GM12878 (cell line): ENCODE measurements at regions of chr16 and their contacts with region 1.

Region 1: DNA sequence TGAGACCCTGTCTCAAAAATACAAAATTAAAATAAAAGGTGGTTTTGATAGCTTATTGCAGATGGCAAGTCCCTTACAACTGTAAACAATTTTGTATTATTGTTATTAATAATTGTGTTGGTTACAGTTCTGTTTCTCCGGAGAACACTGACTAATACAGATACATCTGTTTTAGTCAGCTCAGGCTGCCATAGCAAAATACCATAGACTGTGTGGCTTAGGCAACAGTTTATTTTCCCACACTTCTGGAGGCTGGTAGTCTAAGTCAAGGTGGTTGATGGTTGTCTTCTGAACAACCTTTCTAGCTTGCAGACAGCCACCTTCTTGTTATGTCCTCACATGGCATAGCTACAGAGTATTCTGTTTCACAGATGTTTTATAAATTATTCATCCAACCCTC is 14.2 kb upstream of the IL21R start:
- DNase-seq: peak; percentile 74
- ATAC-seq: peak; percentile 88
- H3K4me3 ChIP-seq: no peak overlapping the region
- H3K27ac ChIP-seq: peak overlapping the region; percentile 54
- H3K4me1 ChIP-seq: peaks cover 37% of the 10 kb centered on the region
- H3K27me3 ChIP-seq: no peaks in the 10 kb centered on the region
- CTCF ChIP-seq: no peak
- EP300 ChIP-seq: peak; percentile 65 to 95; a peak in 2 of 4 replicates
- POLR2A ChIP-seq: no peak
- RAD21 ChIP-seq: no peak

Region 2: GRCh38 chr16:27408012-27408601 is 20.4 kb after region 1 on chr16:
- CTCF ChIA-PET with region 1: interaction called, 6 read pairs
- POLR2A ChIA-PET with region 1: interaction called, 33 read pairs
- RAD21 ChIA-PET with region 1: interaction called, 16 read pairs
- SMC1A ChIA-PET with region 1: interaction called, 42 read pairs
- in situ Hi-C with region 1: no loop called
- intact Hi-C with region 1: no loop called
- DNase-seq: peak; percentile 76
- ATAC-seq: peak; percentile 51
- H3K4me3 ChIP-seq: peak overlapping the region; percentile 86
- H3K27ac ChIP-seq: peak overlapping the region; percentile 97
- H3K4me1 ChIP-seq: peaks cover 28% of the 10 kb centered on the region
- H3K27me3 ChIP-seq: no peaks in the 10 kb centered on the region
- CTCF ChIP-seq: no peak
- EP300 ChIP-seq: peak in 1 of 2 experiments; percentile 11; a peak in 1 of 4 replicates
- POLR2A ChIP-seq: peak; percentile 53; the same call in 1 of the 2 replicates
- RAD21 ChIP-seq: no peak

Region 3: DNA sequence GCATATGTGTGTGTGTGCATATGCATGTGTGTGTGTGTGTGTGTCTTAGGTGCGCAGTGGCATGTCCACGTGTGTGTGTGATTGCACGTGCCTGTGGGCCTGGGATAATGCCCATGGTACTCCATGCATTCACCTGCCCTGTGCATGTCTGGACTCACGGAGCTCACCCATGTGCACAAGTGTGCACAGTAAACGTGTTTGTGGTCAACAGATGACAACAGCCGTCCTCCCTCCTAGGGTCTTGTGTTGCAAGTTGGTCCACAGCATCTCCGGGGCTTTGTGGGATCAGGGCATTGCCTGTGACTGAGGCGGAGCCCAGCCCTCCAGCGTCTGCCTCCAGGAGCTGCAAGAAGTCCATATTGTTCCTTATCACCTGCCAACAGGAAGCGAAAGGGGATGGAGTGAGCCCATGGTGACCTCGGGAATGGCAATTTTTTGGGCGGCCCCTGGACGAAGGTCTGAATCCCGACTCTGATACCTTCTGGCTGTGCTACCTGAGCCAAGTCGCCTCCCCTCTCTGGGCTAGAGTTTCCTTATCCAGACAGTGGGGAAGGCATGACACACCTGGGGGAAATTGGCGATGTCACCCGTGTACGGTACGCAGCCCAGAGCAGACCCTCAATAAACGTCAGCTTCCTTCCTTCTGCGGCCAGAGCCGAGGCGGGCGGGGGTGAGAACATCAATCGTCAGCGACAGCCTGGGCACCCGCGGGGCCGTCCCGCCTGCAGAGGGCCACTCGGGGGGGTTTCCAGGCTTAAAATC is 61.9 kb after region 1 on chr16:
- CTCF ChIA-PET with region 1: interaction called, 4 read pairs
- POLR2A ChIA-PET with region 1: interaction called, 4 read pairs
- RAD21 ChIA-PET with region 1: interaction called, 4 read pairs
- SMC1A ChIA-PET with region 1: interaction called, 8 read pairs
- in situ Hi-C with region 1: no loop called
- intact Hi-C with region 1: loop called (anchors 5 kb)
- DNase-seq: no peak
- ATAC-seq: peak; percentile 79
- H3K4me3 ChIP-seq: no peak overlapping the region
- H3K27ac ChIP-seq: peak overlapping the region; percentile 66
- H3K4me1 ChIP-seq: peaks cover 57% of the 10 kb centered on the region
- H3K27me3 ChIP-seq: no peaks in the 10 kb centered on the region
- CTCF ChIP-seq: no peak
- EP300 ChIP-seq: peak; percentile 81; a peak in 3 of 4 replicates
- POLR2A ChIP-seq: peak; percentile 76
- RAD21 ChIP-seq: 0 out of 2 replicates have a peak, but pooled peaks have one; percentile 1

Region 4: DNA sequence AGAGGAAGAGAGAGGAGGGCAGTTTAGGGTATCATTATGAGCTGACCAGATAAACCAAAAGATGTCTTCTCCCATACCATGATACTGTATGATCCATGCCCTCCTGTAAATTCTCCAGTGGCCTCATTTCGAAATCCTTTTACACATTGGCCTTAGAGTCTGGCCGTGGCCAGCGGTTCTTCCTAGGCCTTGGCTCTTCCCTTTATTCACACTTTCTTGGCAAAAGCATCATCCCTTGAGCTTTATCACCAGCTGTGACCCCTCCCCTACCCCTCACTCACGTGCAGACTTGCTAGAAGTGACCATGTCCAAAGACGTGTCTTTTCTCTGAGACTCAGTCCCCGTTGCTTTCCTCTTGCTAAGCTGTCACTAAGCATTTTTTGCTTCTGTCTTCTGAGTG is 185.0 kb after region 1 on chr16:
- CTCF ChIA-PET with region 1: no interaction called
- POLR2A ChIA-PET with region 1: no interaction called
- RAD21 ChIA-PET with region 1: no interaction called
- SMC1A ChIA-PET with region 1: no interaction called
- in situ Hi-C with region 1: no loop called
- intact Hi-C with region 1: no loop called
- DNase-seq: no peak
- ATAC-seq: no peak
- H3K4me3 ChIP-seq: no peak overlapping the region
- H3K27ac ChIP-seq: no peak overlapping the region
- H3K4me1 ChIP-seq: no peaks in the 10 kb centered on the region
- H3K27me3 ChIP-seq: no peaks in the 10 kb centered on the region
- CTCF ChIP-seq: no peak
- EP300 ChIP-seq: no peak
- POLR2A ChIP-seq: no peak
- RAD21 ChIP-seq: no peak

Region 5: GRCh38 chr16:27748868-27749546 is 361.3 kb after region 1 on chr16:
- CTCF ChIA-PET with region 1: no interaction called
- POLR2A ChIA-PET with region 1: no interaction called
- RAD21 ChIA-PET with region 1: no interaction called
- SMC1A ChIA-PET with region 1: no interaction called
- in situ Hi-C with region 1: no loop called
- intact Hi-C with region 1: no loop called
- DNase-seq: peak; percentile 1
- ATAC-seq: peak; percentile 82
- H3K4me3 ChIP-seq: no peak overlapping the region
- H3K27ac ChIP-seq: no peak overlapping the region
- H3K4me1 ChIP-seq: no peaks in the 10 kb centered on the region
- H3K27me3 ChIP-seq: no peaks in the 10 kb centered on the region
- CTCF ChIP-seq: peak; percentile 31 to 35 (median 34); a peak in 3 of 6 replicates
- EP300 ChIP-seq: no peak
- POLR2A ChIP-seq: no peak
- RAD21 ChIP-seq: peak; percentile 24; the same call in 1 of the 2 replicates